Activated CD4-positive, alpha-beta memory T cell treated with anti-CD3 and anti-CD28 coated beads for 36 hours (primary cell): ENCODE measurements at regions of chr16 and their contacts with region 1.

Region 1: GRCh38 chr16:69386596-69386995 is 789 bp upstream of the TERF2 start:
- DNase-seq: no peak
- H3K4me3 Mint-ChIP-seq: peak overlapping the region; percentile 93
- H3K27ac Mint-ChIP-seq: no peak overlapping the region
- H3K4me1 Mint-ChIP-seq: peaks cover 28% of the 10 kb centered on the region
- H3K27me3 Mint-ChIP-seq: no peaks in the 10 kb centered on the region

Region 2: GRCh38 chr16:69253870-69254341 is 132.7 kb before region 1 on chr16:
- CTCF ChIA-PET with region 1: no interaction called
- POLR2A ChIA-PET with region 1: no interaction called
- intact Hi-C with region 1: no loop called
- DNase-seq: no peak
- H3K4me3 Mint-ChIP-seq: no peak overlapping the region
- H3K27ac Mint-ChIP-seq: no peak overlapping the region
- H3K4me1 Mint-ChIP-seq: peaks cover 14% of the 10 kb centered on the region
- H3K27me3 Mint-ChIP-seq: no peaks in the 10 kb centered on the region

Region 3: DNA sequence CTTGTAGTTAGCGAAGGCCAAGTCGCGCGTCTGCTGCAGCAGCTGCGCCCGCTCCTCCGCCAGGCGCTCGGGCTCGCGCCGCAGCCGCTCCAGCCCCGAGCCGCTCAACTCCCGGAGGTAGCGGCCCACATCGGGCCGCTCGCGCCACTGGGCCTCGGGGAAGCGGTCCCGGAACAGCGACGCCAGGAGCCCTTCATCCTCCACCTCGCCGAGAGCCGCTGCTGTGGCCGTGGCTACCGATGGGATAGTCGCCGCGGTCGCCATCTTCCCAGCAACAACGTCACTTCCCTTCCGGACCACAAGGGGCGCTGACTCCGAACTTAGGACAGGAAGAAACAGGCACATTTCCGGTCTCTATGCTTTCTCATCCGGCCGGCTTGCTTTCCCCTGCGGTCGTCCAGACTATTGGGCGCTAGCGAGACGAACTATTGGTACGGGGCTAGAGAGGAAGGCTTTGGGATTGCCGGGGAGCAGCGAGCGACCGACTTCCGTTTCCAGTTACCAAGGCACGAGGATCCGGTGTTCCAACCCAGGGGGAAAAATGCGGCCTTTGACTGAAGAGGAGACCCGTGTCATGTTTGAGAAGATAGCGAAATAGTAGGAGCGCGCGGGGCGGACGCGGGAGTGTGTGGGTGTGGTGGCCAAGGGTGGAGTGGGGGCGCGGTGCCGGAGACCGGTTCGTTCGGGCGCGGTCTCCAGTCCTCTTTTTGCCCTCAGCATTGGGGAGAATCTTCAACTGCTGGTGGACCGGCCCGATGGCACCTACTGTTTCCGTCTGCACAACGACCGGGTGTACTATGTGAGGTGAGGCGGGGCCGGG is 47.1 kb before region 1 on chr16 and contains the starts of genes COG8 and NIP7:
- CTCF ChIA-PET with region 1: interaction called, 5 read pairs
- POLR2A ChIA-PET with region 1: interaction called, 8 read pairs
- intact Hi-C with region 1: loop called (anchors 1 kb)
- DNase-seq: peak; percentile 96
- H3K4me3 Mint-ChIP-seq: peak within 1 kb of the TSS; percentile 96
- H3K27ac Mint-ChIP-seq: peak within 1 kb of the TSS; percentile 95
- H3K4me1 Mint-ChIP-seq: peaks cover 38% of the 10 kb centered on the region
- H3K27me3 Mint-ChIP-seq: no peaks in the 10 kb centered on the region
- total RNA-seq, gene COG8: 25.4 to 27.9 TPM
- total RNA-seq, gene NIP7: 43.3 to 47.1 TPM